ENCODE measurements at regions of chr17 and their contacts with region 1.

Region 1: GRCh38 chr17:34519282-34519681 is 60.1 kb upstream of the TMEM132E start:
- DNase-seq: peak; percentile 44
- ATAC-seq: peak; percentile 51
- H3K4me3 Mint-ChIP-seq: no peak overlapping the region
- H3K27ac Mint-ChIP-seq: no peak overlapping the region
- H3K4me1 Mint-ChIP-seq: no peaks in the 10 kb centered on the region
- H3K27me3 Mint-ChIP-seq: peaks cover 7% of the 10 kb centered on the region

Region 2: DNA sequence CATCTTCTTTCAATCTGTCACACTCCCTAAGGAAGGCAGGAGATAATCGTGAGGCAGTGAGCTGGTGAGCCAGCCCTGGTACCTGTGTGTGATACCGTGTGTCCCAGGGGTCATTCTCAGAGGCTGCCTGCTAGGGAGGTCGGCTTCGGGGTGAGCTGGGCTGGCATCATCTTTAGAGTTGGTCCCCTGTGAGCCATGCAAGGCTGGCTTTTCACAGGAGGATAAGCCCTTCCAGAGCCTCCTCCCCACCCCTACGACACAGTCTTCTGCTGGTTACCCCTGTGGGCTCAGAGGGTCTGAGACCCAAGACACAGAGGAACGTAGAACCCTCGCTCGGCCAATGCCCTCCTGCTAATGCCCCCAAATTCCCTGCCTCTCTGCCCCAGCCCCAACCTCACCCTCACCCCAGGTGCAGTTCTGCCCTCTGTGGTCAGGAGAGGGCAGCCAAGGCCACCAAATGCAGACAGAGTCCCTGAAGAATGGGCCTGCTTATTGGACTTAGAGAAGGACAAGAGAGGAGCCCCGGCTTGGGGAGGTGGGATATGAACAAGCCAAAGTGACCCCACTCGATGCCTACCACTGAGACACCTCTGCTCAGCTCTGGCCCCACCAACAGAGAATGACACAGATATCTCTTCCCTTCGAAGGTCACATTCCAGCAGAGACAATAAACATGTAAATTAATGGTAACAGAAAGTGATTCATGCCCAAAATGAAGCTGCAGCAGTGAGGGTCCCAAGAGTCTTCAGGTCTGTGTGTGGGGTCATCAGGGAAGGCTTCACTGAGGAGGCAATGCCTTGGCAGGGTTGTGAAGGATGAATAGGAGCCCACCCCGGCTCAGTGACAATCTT is 75.4 kb before region 1 on chr17:
- CTCF ChIA-PET with region 1: no interaction called
- POLR2A ChIA-PET with region 1: no interaction called
- intact Hi-C with region 1: loop called in 1 of 2 experiments (anchors 2 kb)
- DNase-seq: peak; percentile 34
- ATAC-seq: no peak
- H3K4me3 Mint-ChIP-seq: no peak overlapping the region
- H3K27ac Mint-ChIP-seq: no peak overlapping the region
- H3K4me1 Mint-ChIP-seq: no peaks in the 10 kb centered on the region
- H3K27me3 Mint-ChIP-seq: peaks cover 8% of the 10 kb centered on the region

Measured in activated CD4-positive, alpha-beta T cell treated with anti-CD3 and anti-CD28 coated beads for 36 hours (primary cell).